ENCODE measurements at regions of chr20 and their contacts with region 1.

Region 1: GRCh38 chr20:21303061-21303871 is at the start of gene XRN2:
- DNase-seq: peak; percentile 98
- ATAC-seq: peak; percentile 85
- H3K4me3 Mint-ChIP-seq: peak within 1 kb of the TSS; percentile 93
- H3K27ac Mint-ChIP-seq: peak within 1 kb of the TSS; percentile 98
- H3K4me1 Mint-ChIP-seq: peaks cover 31% of the 10 kb centered on the region
- H3K27me3 Mint-ChIP-seq: no peaks in the 10 kb centered on the region
- total RNA-seq, gene XRN2: 87.1 to 88.4 TPM

Region 2: GRCh38 chr20:21125849-21126580 is 177.3 kb before region 1 on chr20 and contains the start of gene KIZ:
- CTCF ChIA-PET with region 1: no interaction called
- POLR2A ChIA-PET with region 1: interaction called, 4 read pairs
- intact Hi-C with region 1: loop called (anchors 1 to 5 kb)
- DNase-seq: peak; percentile 99
- ATAC-seq: peak; percentile 97
- H3K4me3 Mint-ChIP-seq: peak within 1 kb of the TSS; percentile 95
- H3K27ac Mint-ChIP-seq: peak within 1 kb of the TSS; percentile 86
- H3K4me1 Mint-ChIP-seq: peaks cover 18% of the 10 kb centered on the region
- H3K27me3 Mint-ChIP-seq: no peaks in the 10 kb centered on the region
- total RNA-seq, gene KIZ: 13.2 to 15.2 TPM

Region 3: DNA sequence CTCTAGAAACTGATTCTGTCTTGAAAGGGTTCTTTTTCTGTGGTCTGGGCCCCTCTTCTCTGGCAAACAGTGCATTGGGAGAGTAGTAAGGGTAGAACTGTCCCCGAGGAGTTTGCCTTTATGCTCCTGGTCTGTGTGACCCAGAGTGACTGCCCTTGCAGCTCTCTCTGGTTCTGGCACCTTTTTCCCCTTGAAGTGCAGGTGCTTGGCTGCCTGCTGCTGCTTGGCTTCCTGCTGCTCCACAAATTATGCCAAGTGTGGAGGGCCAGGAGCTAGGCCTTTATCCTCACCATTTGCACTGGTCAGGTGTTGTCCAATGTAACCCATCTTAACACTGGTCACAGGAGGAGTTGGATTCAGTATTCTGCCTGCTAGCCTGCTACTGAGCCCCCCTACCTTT is 166.2 kb before region 1 on chr20:
- CTCF ChIA-PET with region 1: no interaction called
- POLR2A ChIA-PET with region 1: no interaction called
- intact Hi-C with region 1: no loop called
- DNase-seq: no peak
- ATAC-seq: no peak
- H3K4me3 Mint-ChIP-seq: no peak overlapping the region
- H3K27ac Mint-ChIP-seq: no peak overlapping the region
- H3K4me1 Mint-ChIP-seq: no peaks in the 10 kb centered on the region
- H3K27me3 Mint-ChIP-seq: no peaks in the 10 kb centered on the region

Region 4: GRCh38 chr20:21251278-21251677 is 52.0 kb before region 1 on chr20:
- CTCF ChIA-PET with region 1: no interaction called
- POLR2A ChIA-PET with region 1: interaction called, 3 read pairs
- intact Hi-C with region 1: loop called in 1 of 2 experiments (anchors 5 kb)
- DNase-seq: peak; percentile 40
- ATAC-seq: peak; percentile 94
- H3K4me3 Mint-ChIP-seq: no peak overlapping the region
- H3K27ac Mint-ChIP-seq: peak overlapping the region; percentile 78
- H3K4me1 Mint-ChIP-seq: peaks cover 16% of the 10 kb centered on the region
- H3K27me3 Mint-ChIP-seq: peaks cover 2% of the 10 kb centered on the region

Region 5: GRCh38 chr20:21280522-21281016 is 22.7 kb before region 1 on chr20:
- CTCF ChIA-PET with region 1: no interaction called
- POLR2A ChIA-PET with region 1: no interaction called
- intact Hi-C with region 1: no loop called
- DNase-seq: no peak
- ATAC-seq: no peak
- H3K4me3 Mint-ChIP-seq: no peak overlapping the region
- H3K27ac Mint-ChIP-seq: no peak overlapping the region
- H3K4me1 Mint-ChIP-seq: no peaks in the 10 kb centered on the region
- H3K27me3 Mint-ChIP-seq: peaks cover 22% of the 10 kb centered on the region

Region 6: DNA sequence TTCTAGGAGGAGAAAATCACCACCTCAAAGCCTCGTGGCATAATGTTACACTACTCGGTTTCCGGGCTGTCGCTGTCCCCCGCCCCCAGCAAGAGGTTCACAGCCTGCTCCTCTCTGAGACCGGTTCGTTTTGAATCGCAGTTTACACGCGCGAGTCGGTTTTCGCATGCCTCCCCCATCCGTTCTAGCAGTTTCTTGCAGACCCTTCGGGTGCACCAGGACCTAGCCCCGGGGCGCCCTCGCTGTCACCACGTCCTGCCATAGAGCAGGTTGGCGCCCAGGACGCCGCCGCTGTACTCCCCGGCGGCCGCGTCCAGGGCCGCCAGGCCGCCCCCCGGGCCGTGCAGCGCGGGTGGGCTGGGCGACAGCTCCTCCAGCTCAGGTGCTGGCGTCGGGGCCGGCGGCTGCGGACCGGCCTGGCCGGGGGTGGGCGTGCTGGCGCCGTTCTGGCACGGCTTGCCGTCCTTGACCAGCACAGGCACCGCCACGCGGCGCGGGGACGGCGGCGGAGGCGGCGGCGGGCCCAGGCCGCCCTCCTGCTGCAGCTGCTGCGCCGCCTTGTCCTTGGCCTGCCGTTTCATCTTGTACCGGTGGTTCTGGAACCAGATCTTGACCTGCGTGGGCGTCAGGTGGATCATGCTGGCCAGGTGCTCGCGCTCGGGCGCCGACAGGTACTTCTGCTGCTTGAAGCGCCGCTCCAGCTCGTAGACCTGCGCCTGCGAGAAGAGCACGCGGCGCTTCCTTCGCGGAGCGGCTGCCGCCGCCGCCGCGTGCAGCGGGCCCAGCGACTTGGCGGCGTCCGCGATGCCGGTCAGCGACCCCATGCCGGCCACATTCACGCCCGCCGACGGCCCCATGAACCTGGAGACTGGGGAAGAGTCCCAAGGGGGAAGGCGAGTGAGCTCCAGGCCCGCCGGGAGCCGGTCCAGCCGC is 92.7 kb after region 1 on chr20:
- CTCF ChIA-PET with region 1: no interaction called
- POLR2A ChIA-PET with region 1: no interaction called
- intact Hi-C with region 1: loop called (anchors 1 to 5 kb)
- DNase-seq: peak; percentile 67
- ATAC-seq: peak; percentile 76
- H3K4me3 Mint-ChIP-seq: peak overlapping the region; percentile 40
- H3K27ac Mint-ChIP-seq: no peak overlapping the region
- H3K4me1 Mint-ChIP-seq: peaks cover 24% of the 10 kb centered on the region
- H3K27me3 Mint-ChIP-seq: peaks cover 62% of the 10 kb centered on the region

Region 7: DNA sequence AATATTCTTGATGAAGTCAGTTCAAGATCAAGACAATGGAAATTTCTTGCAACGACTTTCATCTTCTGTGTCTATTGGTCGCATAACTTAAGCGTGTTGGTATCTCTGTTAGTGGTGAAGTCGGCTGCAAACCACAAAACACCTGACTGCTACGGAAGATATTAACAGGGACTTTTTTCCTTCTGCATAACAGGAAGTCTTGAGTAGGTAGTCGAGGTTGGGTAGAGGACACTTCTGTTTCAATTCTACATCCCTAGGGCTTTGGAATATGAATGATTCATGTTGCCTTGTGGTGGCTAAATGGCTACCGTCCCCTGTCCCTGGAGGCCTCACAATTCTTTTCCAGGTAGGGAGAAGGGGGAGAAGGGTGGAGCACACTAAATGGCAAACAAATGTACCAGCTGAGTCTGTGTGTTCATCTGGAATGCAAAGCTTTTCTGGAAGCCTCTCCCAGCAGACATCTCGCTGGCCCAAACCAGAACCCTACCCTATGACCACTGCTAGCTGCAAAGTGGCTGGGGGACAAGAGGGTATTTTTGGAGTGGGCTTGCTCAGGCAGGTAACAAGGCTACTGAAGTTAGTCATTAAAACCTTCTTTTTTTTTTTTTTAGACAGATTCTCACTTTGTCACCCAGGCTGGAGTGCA is 245.2 kb after region 1 on chr20:
- CTCF ChIA-PET with region 1: no interaction called
- POLR2A ChIA-PET with region 1: no interaction called
- intact Hi-C with region 1: loop called in 1 of 2 experiments (anchors 2 kb)
- DNase-seq: peak; percentile 71
- ATAC-seq: peak; percentile 88
- H3K4me3 Mint-ChIP-seq: peak overlapping the region; percentile 32
- H3K27ac Mint-ChIP-seq: peak overlapping the region; percentile 64
- H3K4me1 Mint-ChIP-seq: peaks cover 38% of the 10 kb centered on the region
- H3K27me3 Mint-ChIP-seq: no peaks in the 10 kb centered on the region

Region 8: DNA sequence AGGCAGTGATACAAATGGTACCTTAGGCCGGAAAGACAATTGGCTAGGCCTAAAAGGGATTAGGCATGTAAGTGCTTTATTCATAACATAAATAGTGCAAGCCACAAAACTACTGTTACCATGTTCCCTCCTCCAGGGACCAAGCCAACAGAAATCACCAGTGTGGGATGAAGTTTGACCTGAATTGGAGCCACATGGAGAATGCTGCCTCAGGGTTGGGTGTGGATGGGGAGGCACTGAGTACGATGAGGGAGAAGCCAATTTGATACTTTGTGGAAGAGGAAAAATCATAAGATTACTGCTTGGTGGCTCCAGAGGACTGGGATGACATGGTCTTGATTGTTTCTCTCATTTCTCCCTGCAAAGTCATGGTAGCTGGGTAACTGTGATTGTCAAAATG is 452.7 kb after region 1 on chr20:
- CTCF ChIA-PET with region 1: no interaction called
- POLR2A ChIA-PET with region 1: no interaction called
- intact Hi-C with region 1: no loop called
- DNase-seq: no peak
- ATAC-seq: no peak
- H3K4me3 Mint-ChIP-seq: no peak overlapping the region
- H3K27ac Mint-ChIP-seq: no peak overlapping the region
- H3K4me1 Mint-ChIP-seq: no peaks in the 10 kb centered on the region
- H3K27me3 Mint-ChIP-seq: no peaks in the 10 kb centered on the region